T-cell (primary cell): ENCODE measurements at regions of chr12 and their contacts with region 1.

Region 1: DNA sequence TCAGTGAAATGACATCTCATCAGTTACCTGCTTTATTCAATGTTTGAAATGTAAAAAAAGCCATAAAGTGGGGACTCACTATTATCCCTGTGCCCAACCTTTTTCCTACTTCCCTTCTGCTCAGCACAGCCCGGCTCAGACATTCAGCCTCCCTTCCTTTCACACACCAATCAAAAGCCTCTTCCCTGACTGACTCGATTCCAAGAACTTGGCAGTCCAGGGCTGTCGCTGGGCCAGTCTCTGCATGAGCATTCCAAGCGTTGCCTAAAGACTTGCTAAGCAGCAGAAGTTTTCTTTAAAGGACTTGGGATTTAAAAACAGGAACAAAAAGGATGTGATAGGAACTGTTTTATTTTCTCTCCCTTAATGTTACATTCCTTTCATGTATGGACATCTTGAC is 22.7 kb downstream of the ITPR2 start:
- DNase-seq: no peak
- ATAC-seq: no peak
- H3K4me3 ChIP-seq: no peak overlapping the region
- H3K4me3 Mint-ChIP-seq: no peak overlapping the region
- H3K27ac ChIP-seq: no peak overlapping the region
- H3K27ac Mint-ChIP-seq: no peak overlapping the region
- H3K4me1 ChIP-seq: peaks cover 0 to 3% of the 10 kb centered on the region in 2 experiments
- H3K4me1 Mint-ChIP-seq: peaks cover 20 to 34% (median 33%) of the 10 kb centered on the region in 3 donors
- H3K27me3 ChIP-seq: no peaks in the 10 kb centered on the region
- H3K27me3 Mint-ChIP-seq: no peaks in the 10 kb centered on the region

Region 2: GRCh38 chr12:26359576-26359975 is 450.8 kb before region 1 on chr12:
- CTCF ChIA-PET with region 1: no interaction called
- POLR2A ChIA-PET with region 1: interaction called in 1 of 2 experiments, 14 read pairs
- DNase-seq: no peak
- ATAC-seq: no peak
- H3K4me3 ChIP-seq: no peak overlapping the region
- H3K4me3 Mint-ChIP-seq: no peak overlapping the region
- H3K27ac ChIP-seq: no peak overlapping the region
- H3K27ac Mint-ChIP-seq: no peak overlapping the region
- H3K4me1 ChIP-seq: no peaks in the 10 kb centered on the region
- H3K4me1 Mint-ChIP-seq: no peaks in the 10 kb centered on the region
- H3K27me3 ChIP-seq: no peaks in the 10 kb centered on the region
- H3K27me3 Mint-ChIP-seq: no peaks in the 10 kb centered on the region

Region 3: GRCh38 chr12:26783131-26783526 is 27.2 kb before region 1 on chr12:
- CTCF ChIA-PET with region 1: no interaction called
- POLR2A ChIA-PET with region 1: no interaction called
- DNase-seq: no peak
- ATAC-seq: no peak
- H3K4me3 ChIP-seq: no peak overlapping the region
- H3K4me3 Mint-ChIP-seq: no peak overlapping the region
- H3K27ac ChIP-seq: no peak overlapping the region
- H3K27ac Mint-ChIP-seq: no peak overlapping the region
- H3K4me1 ChIP-seq: no peaks in the 10 kb centered on the region
- H3K4me1 Mint-ChIP-seq: peaks cover 0 to 3% (median 0%) of the 10 kb centered on the region in 3 donors
- H3K27me3 ChIP-seq: no peaks in the 10 kb centered on the region
- H3K27me3 Mint-ChIP-seq: no peaks in the 10 kb centered on the region